A549 (cell line): ENCODE measurements at regions of chr5 and their contacts with region 1.

Region 1: GRCh38 chr5:91419571-91420537 is 36.7 kb upstream of the ARRDC3 start:
- DNase-seq: peak; percentile 26 to 76
- ATAC-seq: peak in 1 of 2 experiments; percentile 77; a peak in 3 of 6 replicates
- H3K4me3 ChIP-seq: no peak overlapping the region
- H3K27ac ChIP-seq: no peak overlapping the region
- H3K4me1 ChIP-seq: peaks cover 24% of the 10 kb centered on the region
- CTCF ChIP-seq: peak; percentile 89
- EP300 ChIP-seq: no peak
- POLR2A ChIP-seq: no peak
- RAD21 ChIP-seq: peak; percentile 87 to 95

Region 2: GRCh38 chr5:90802474-90803317 is 617.2 kb before region 1 on chr5:
- CTCF ChIA-PET with region 1: interaction called, 68 read pairs
- POLR2A ChIA-PET with region 1: interaction called, 4 read pairs
- DNase-seq: peak; percentile 37 to 60
- ATAC-seq: peak; percentile 79 to 92; a peak in 5 of 6 replicates
- H3K4me3 ChIP-seq: no peak overlapping the region
- H3K27ac ChIP-seq: no peak overlapping the region
- H3K4me1 ChIP-seq: no peaks in the 10 kb centered on the region
- CTCF ChIP-seq: peak; percentile 70
- EP300 ChIP-seq: no peak
- POLR2A ChIP-seq: no peak
- RAD21 ChIP-seq: peak; percentile 51 to 52; a peak in 4 of 5 replicates

Region 3: DNA sequence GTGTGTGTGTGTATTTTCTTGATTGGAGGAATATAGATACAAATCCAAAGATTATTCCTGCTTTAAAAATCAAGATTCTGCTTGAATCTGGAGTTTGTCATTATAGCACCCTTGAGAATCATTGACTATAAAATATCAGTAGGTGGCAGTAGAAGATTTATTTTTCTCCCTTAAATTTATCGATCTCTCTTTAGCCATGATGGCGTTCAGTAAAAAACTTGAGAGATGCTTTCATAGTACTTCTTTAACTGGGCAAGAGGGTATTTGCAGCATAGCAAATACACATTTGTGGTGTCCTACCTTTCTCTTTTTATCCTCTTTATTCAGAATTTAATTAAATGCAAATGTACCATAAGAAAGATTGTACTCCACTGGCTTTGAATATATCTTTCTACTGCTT is 553.5 kb before region 1 on chr5:
- CTCF ChIA-PET with region 1: interaction called, 71 read pairs
- POLR2A ChIA-PET with region 1: no interaction called
- DNase-seq: peak; percentile 32 to 50
- ATAC-seq: peak; percentile 69 to 85; a peak in 3 of 6 replicates
- H3K4me3 ChIP-seq: no peak overlapping the region
- H3K27ac ChIP-seq: peak overlapping the region; percentile 32 to 53; a peak in 2 of 6 replicates
- H3K4me1 ChIP-seq: peaks cover 19% of the 10 kb centered on the region
- CTCF ChIP-seq: peak; percentile 77
- EP300 ChIP-seq: no peak
- POLR2A ChIP-seq: no peak
- RAD21 ChIP-seq: peak; percentile 83 to 92

Region 4: DNA sequence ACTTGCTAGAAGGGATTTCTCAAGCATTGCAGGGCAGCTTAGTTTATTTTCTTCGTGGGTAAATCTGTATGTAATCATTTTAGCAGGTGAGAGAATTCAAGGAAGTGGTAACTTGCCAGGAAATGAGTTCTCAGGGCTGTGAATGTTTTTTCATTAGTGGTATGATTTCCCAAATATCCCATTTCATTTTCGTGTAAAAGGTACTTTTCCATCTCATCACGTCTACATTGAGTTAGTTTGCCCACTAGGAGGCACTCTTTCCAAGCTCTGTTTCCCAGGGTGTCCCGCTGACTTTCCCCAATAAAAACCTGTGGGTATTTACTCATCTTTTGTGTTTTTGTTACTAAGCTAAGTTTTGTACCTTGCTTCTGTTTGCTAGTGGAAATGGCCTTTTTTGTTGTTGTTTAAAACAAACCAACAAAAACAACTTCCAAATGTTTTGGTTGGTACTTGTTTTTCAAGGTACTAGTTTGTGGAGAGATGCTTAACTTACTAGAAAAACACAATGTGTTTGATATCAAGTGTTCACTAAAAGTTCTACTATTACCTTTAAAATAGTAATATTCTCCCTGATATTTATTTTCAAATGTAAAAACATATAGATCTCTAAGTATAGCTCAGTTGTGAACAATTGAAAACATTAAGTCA is 487.7 kb before region 1 on chr5:
- CTCF ChIA-PET with region 1: interaction called, 10 read pairs
- POLR2A ChIA-PET with region 1: no interaction called
- DNase-seq: peak; percentile 47 to 80
- ATAC-seq: peak; percentile 77 to 93
- H3K4me3 ChIP-seq: no peak overlapping the region
- H3K27ac ChIP-seq: peak overlapping the region; percentile 72 to 82
- H3K4me1 ChIP-seq: peaks cover 33% of the 10 kb centered on the region
- CTCF ChIP-seq: peak; percentile 94
- EP300 ChIP-seq: no peak
- POLR2A ChIP-seq: no peak
- RAD21 ChIP-seq: peak; percentile 96 to 98

Region 5: GRCh38 chr5:91408710-91409109 is 11.1 kb before region 1 on chr5:
- CTCF ChIA-PET with region 1: interaction called, 19 read pairs
- POLR2A ChIA-PET with region 1: interaction called, 3 read pairs
- DNase-seq: no peak
- ATAC-seq: no peak
- H3K4me3 ChIP-seq: no peak overlapping the region
- H3K27ac ChIP-seq: no peak overlapping the region
- H3K4me1 ChIP-seq: peaks cover 9% of the 10 kb centered on the region
- CTCF ChIP-seq: no peak
- EP300 ChIP-seq: no peak
- POLR2A ChIP-seq: no peak
- RAD21 ChIP-seq: no peak

Region 6: GRCh38 chr5:91433861-91434260 is 14.0 kb after region 1 on chr5:
- CTCF ChIA-PET with region 1: interaction called, 24 read pairs
- POLR2A ChIA-PET with region 1: no interaction called
- DNase-seq: no peak
- ATAC-seq: no peak
- H3K4me3 ChIP-seq: no peak overlapping the region
- H3K27ac ChIP-seq: no peak overlapping the region
- H3K4me1 ChIP-seq: no peaks in the 10 kb centered on the region
- CTCF ChIP-seq: no peak
- EP300 ChIP-seq: no peak
- POLR2A ChIP-seq: no peak
- RAD21 ChIP-seq: no peak

Region 7: DNA sequence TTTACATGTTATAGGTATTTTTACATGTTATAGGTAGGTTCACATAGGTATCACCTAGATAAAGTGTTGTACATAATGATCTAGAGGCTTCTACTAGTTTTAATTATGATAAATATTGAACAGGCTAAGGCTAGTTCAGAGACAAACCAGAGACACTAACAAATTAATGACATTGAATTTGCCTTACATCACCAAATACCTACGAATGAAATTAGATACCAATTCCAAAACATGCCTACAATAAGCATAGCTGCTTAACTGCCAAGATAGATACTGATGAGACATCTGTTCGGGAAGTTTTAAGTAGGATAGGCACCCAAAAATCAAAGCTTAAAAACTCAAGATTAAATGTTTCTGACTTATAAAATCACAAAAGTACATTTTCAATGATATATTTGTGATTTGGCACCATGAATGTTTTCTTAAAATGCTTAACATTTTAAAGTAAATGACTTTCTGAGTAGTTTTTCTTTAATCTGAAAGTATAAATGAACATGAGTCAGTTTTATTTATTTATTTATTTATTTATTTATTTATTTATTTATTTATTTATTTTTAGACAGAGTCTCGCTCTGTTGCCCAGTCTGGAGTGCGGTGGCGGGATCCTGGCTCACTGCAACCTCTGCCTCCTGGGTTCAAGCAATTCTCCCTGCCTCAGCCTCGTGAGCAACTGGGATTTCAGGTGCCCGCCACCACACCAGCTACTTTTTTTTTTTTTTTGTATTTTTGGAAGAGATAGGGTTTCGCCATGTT is 666.4 kb after region 1 on chr5:
- CTCF ChIA-PET with region 1: no interaction called
- POLR2A ChIA-PET with region 1: no interaction called
- DNase-seq: no peak
- ATAC-seq: no peak
- H3K4me3 ChIP-seq: no peak overlapping the region
- H3K27ac ChIP-seq: no peak overlapping the region
- H3K4me1 ChIP-seq: no peaks in the 10 kb centered on the region
- CTCF ChIP-seq: no peak
- EP300 ChIP-seq: no peak
- POLR2A ChIP-seq: no peak
- RAD21 ChIP-seq: no peak